ENCODE measurements at regions of chr3 and their contacts with region 1.

Region 1: DNA sequence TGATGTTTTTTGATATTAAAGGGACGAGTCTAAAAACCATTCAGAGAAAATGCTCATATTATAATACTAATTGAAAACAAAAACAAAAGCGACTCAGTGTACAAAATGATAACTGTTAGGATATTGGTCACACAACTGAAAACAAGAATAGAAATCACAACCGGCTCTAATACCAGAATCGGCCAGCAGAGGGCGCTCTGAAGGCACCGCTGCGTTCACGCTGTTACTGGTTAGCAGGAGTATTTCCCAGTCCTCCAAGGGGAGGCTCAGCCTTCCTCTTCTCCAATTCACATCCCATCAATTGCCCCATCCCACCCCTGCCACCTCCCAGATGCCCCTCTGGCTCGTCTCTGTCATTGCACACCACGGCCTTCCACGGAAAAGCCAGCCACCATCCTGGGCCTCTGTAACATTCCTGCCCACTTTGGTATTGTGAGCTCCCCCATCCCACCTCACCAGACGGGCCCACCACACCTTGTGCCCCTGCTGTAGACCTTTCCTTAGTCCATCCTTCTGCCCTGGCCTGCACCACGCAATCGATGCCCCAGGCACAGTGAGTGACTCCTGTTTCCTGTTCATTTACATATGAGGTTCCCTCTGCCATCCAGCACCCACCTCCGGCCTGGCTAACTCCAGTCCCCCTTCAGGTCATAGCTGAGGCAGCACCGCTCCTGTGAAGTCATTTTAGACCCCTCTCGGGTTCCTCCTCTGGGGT is 8.5 kb downstream of the FAM107A start:
- DNase-seq: peak; percentile 67
- H3K4me3 Mint-ChIP-seq: no peak overlapping the region
- H3K27ac Mint-ChIP-seq: peak overlapping the region; percentile 77
- H3K4me1 Mint-ChIP-seq: peaks cover 16% of the 10 kb centered on the region
- H3K27me3 Mint-ChIP-seq: no peaks in the 10 kb centered on the region
- CTCF ChIP-seq: peak; percentile 89

Region 2: DNA sequence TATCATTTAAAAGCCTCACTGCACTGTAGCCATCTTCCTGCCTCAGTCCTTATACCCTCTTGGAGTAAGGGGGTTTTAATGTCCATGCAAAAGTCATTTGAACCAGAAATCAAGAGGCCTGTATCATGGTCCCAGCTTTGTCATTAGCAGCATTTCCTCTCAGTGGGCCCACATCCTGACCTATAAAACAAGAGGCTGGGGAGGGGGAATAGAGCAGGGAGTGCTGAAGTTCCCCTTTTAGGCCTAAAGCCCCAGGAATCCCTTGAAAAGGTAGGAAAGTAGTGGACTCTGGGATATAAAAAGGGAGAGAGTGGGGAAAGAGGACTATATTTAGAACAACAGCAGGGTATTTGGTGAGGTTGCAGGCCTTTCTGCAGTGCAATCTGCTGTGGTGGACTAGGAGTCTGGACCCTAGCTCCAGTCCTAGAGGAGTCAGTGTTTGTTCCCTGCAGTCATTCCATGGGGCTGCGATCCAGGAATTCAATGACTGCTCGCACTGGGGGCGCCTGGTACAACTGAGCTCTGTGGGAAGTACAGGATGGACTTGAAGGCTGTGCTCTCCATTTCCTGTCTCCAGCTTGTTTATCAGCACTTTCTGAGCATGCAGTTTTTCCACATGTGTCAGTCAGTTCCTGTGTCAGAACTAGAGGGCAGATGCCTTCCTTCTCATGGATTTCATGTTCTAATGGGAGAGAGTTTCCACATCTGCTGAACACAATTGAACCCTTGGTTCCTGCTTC is 181.9 kb before region 1 on chr3:
- CTCF ChIA-PET with region 1: no interaction called
- POLR2A ChIA-PET with region 1: no interaction called
- intact Hi-C with region 1: no loop called
- DNase-seq: no peak
- H3K4me3 Mint-ChIP-seq: no peak overlapping the region
- H3K27ac Mint-ChIP-seq: no peak overlapping the region
- H3K4me1 Mint-ChIP-seq: peaks cover 25% of the 10 kb centered on the region
- H3K27me3 Mint-ChIP-seq: no peaks in the 10 kb centered on the region
- CTCF ChIP-seq: no peak

Region 3: GRCh38 chr3:58585005-58585786 is 16.5 kb after region 1 on chr3:
- CTCF ChIA-PET with region 1: interaction called, 33 read pairs
- POLR2A ChIA-PET with region 1: no interaction called
- intact Hi-C with region 1: no loop called
- DNase-seq: peak; percentile 64
- H3K4me3 Mint-ChIP-seq: peak overlapping the region; percentile 85
- H3K27ac Mint-ChIP-seq: no peak overlapping the region
- H3K4me1 Mint-ChIP-seq: peaks cover 11% of the 10 kb centered on the region
- H3K27me3 Mint-ChIP-seq: peaks cover 14% of the 10 kb centered on the region
- CTCF ChIP-seq: peak; percentile 55

Region 4: DNA sequence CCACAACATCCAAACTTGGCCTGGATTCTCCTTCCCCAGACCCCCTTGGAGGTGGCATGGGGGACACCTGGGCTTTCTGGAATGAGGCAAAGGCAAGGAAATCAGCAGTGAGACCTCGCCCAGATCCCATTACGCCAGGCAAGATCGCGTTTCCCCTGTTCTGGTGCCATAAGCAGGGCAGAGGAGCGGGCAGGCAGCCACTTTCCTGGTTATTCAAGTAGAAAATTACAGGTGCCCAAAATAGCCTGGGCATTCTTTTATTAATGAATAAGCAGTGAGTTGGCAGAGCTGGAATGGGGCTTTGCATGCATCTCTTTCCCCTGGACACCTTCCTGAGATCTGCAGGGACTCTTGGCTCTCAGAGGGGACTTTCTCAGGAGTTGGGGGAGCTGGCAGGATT is 39.9 kb after region 1 on chr3:
- CTCF ChIA-PET with region 1: interaction called, 12 read pairs
- POLR2A ChIA-PET with region 1: no interaction called
- intact Hi-C with region 1: no loop called
- DNase-seq: no peak
- H3K4me3 Mint-ChIP-seq: no peak overlapping the region
- H3K27ac Mint-ChIP-seq: no peak overlapping the region
- H3K4me1 Mint-ChIP-seq: no peaks in the 10 kb centered on the region
- H3K27me3 Mint-ChIP-seq: peaks cover 24% of the 10 kb centered on the region
- CTCF ChIP-seq: no peak

Measured in MCF 10A (cell line).